Right cardiac atrium (tissue), 5 donors: ENCODE measurements at regions of chr18 and their contacts with region 1.

Region 1: GRCh38 chr18:22194151-22194598 is 24.8 kb downstream of the GATA6 start:
- DNase-seq: peak; percentile 66 to 82 (median 79)
- ATAC-seq: peak; percentile 73 to 88
- H3K4me3 ChIP-seq: no peak overlapping the region
- H3K27ac ChIP-seq: peak overlapping the region; percentile 92
- H3K4me1 ChIP-seq: peaks cover 17% of the 10 kb centered on the region
- H3K27me3 ChIP-seq: no peaks in the 10 kb centered on the region

Region 2: DNA sequence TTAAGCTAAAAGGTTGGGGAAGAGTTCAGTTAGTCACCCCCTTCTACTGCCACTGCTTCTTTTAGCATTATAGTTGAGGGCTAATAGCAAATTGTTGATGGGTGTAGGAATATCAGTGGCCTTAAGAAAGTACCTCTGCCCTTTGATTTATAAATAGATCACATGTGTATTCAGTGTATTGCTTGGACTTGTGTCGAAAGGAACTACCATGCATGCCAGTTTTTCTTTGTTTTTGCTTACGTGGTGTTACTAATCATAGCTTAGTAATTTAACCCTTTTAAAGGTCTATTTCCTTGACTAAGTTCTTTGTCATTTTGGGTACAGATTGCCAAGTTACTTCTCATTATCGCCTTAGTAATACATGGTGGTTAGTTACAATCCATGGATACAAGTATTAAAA is 368.0 kb before region 1 on chr18:
- intact Hi-C with region 1: no loop called
- DNase-seq: no peak
- ATAC-seq: peak; percentile 61 to 70
- H3K4me3 ChIP-seq: peak overlapping the region; percentile 50
- H3K27ac ChIP-seq: no peak overlapping the region
- H3K4me1 ChIP-seq: no peaks in the 10 kb centered on the region
- H3K27me3 ChIP-seq: no peaks in the 10 kb centered on the region

Region 3: GRCh38 chr18:22267697-22268096 is 73.5 kb after region 1 on chr18:
- intact Hi-C with region 1: loop called in 1 of 4 experiments (anchors 5 kb)
- DNase-seq: peak; percentile 79 to 88 (median 87)
- ATAC-seq: peak; percentile 95
- H3K4me3 ChIP-seq: no peak overlapping the region
- H3K27ac ChIP-seq: peak overlapping the region; percentile 94
- H3K4me1 ChIP-seq: peaks cover 4% of the 10 kb centered on the region
- H3K27me3 ChIP-seq: no peaks in the 10 kb centered on the region

Region 4: DNA sequence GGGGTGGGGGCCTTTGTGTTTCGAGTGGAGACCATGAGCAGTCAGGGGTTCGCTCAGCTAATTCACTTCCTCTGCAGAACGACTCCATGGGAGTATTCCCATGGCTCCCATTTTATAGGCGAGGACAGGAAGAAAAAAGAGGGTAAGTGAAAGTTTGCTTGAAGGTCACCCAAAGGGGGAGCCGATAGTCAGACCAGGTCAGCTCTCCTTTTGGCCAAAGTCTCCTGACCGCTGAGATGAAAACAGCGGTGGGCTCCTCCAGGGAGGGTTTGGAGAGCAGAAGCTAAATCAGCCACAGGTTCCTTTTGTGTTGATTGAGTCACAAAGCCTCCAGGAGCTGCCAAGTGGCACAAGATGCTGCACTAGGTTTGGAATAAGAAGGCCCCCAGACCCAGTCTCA is 257.6 kb after region 1 on chr18:
- intact Hi-C with region 1: loop called in 1 of 4 experiments (anchors 10 kb)
- DNase-seq: peak in 1 of 3 donors; percentile 53
- ATAC-seq: peak in 1 of 2 donors; percentile 24
- H3K4me3 ChIP-seq: no peak overlapping the region
- H3K27ac ChIP-seq: peak overlapping the region; percentile 65
- H3K4me1 ChIP-seq: peaks cover 2% of the 10 kb centered on the region
- H3K27me3 ChIP-seq: no peaks in the 10 kb centered on the region